ENCODE measurements at regions of chr5 and their contacts with region 1.

Region 1: GRCh38 chr5:59039296-59040023 is 456.6 kb downstream of the RAB3C start:
- DNase-seq: peak; percentile 90
- ATAC-seq: peak; percentile 75

Region 2: GRCh38 chr5:59115345-59115744 is 75.9 kb after region 1 on chr5:
- intact Hi-C with region 1: loop called (anchors 10 kb)
- DNase-seq: no peak
- ATAC-seq: peak; percentile 37

Region 3: GRCh38 chr5:59174248-59174844 is 134.9 kb after region 1 on chr5:
- intact Hi-C with region 1: loop called (anchors 5 kb)
- DNase-seq: no peak
- ATAC-seq: peak; percentile 81

Measured in left ventricle myocardium superior (tissue), 1 donor.